IMR-90 (cell line): ENCODE measurements at regions of chr6 and their contacts with region 1.

Region 1: GRCh38 chr6:134835993-134836392 is 113.9 kb downstream of the ALDH8A1 start:
- DNase-seq: peak; percentile 44
- ATAC-seq: peak; percentile 60
- H3K4me3 ChIP-seq: no peak overlapping the region
- H3K27ac ChIP-seq: peak overlapping the region; percentile 95; the same call in 1 of the 2 replicates
- H3K4me1 ChIP-seq: peaks cover 14% of the 10 kb centered on the region
- H3K27me3 ChIP-seq: no peaks in the 10 kb centered on the region
- CTCF ChIP-seq: no peak
- POLR2A ChIP-seq: no peak
- RAD21 ChIP-seq: no peak

Region 2: DNA sequence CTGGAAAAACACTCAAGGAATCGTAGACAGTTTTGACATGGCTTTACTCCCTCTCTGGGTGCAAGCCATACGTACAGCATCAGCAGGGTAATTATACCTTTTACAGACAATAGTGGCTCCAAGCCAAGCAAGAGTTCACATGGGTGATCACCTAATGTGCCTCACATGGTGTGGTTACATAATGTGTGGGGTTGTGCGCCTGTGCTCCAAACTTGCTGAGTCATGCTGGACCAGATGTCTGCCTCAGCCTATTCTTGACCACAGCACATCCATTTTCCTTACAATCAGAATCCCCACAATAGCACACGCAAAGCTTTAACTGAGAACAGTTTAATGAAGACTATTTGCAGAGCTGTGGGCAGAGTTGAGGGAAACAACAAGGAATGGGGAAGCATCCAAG is 39.4 kb after region 1 on chr6:
- CTCF ChIA-PET with region 1: no interaction called
- POLR2A ChIA-PET with region 1: no interaction called
- dilution Hi-C with region 1: no loop called
- in situ Hi-C with region 1: no loop called
- intact Hi-C with region 1: loop called (anchors 5 kb)
- DNase-seq: peak; percentile 35
- ATAC-seq: no peak
- H3K4me3 ChIP-seq: no peak overlapping the region
- H3K27ac ChIP-seq: no peak overlapping the region
- H3K4me1 ChIP-seq: peaks cover 3% of the 10 kb centered on the region
- H3K27me3 ChIP-seq: no peaks in the 10 kb centered on the region
- CTCF ChIP-seq: no peak
- POLR2A ChIP-seq: no peak
- RAD21 ChIP-seq: no peak